Activated CD4-positive, alpha-beta T cell treated with anti-CD3 and anti-CD28 coated beads, Interleukin-2, amount 10 ng/mL, durations not matched to agents 24 days and 14 days (primary cell): ENCODE measurements at regions of chrX and their contacts with region 1.

Region 1: DNA sequence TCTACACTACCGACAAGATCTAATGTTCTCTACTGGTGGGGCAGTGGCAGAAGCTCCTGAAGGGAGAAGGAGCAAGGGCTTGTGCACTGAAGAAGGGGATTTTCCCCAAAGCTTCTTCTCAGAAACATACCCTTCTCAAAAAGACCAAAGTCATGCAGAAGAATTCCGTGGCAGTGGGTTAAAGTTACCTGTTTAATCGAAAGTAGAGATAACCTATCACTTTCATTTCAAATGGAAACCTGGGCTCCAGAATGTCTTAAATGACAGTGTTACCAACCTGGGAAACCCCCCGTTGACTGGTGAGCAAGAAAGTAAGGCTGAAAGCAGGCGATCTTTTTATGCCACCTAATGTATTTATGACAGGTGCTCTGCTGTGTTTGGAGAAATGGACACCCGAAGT is 92.5 kb upstream of the TEX13D start:
- DNase-seq: peak; percentile 84
- H3K4me3 Mint-ChIP-seq: peak overlapping the region; percentile 71
- H3K27ac Mint-ChIP-seq: peak overlapping the region; percentile 84
- H3K4me1 Mint-ChIP-seq: peaks cover 31% of the 10 kb centered on the region
- H3K27me3 Mint-ChIP-seq: no peaks in the 10 kb centered on the region

Region 2: DNA sequence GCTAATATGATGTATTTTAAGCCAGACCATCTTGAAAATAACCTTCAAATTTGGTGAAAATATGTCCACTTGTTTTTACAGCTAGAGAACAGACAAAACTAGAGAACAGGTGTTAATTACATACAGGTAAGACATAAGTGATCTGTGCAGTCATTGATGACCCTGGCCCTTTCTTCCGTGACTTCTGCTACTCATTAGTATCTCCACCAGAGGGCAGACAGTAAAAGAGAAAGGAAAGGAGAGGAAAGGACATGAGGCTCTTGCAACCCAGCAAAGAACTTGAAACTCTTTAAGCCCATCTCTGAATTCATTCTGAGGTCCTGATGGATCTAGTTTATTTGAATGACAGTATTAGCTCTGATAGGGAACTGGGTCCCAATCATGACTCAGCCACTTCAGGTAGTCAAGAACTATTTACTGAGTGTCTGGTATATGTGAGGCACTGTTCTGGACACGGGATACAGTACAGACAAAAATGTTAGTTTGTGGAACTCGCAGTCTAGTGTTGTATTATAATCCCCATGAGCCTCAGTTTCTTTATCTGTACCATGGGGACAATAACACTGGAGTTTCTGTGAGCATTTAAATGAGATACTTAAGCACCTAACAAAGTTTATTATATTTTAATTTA is 28.5 kb before region 1 on chrX:
- intact Hi-C with region 1: loop called (anchors 1 kb)
- DNase-seq: peak; percentile 79
- H3K4me3 Mint-ChIP-seq: no peak overlapping the region
- H3K27ac Mint-ChIP-seq: no peak overlapping the region
- H3K4me1 Mint-ChIP-seq: peaks cover 33% of the 10 kb centered on the region
- H3K27me3 Mint-ChIP-seq: no peaks in the 10 kb centered on the region

Region 3: DNA sequence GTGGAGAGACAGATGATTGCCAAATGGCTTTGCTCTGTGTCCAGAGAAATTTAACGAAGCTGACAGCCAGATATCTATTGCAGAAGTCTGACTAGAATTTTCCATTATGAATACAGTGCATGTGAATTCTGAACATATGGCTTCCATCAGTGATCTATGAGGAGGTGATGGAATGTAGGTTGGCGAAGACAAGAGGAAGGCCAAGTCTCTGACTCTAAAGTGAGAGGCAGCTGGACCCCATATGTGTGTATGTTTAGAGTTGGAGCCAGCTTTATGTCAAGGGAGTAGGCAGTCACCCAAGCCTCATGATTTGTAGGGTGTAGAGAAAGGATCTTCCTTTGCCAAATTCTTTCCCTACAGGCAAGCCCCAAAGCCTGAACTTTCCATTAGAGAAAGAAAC is 16.3 kb after region 1 on chrX:
- intact Hi-C with region 1: loop called (anchors 2 kb)
- DNase-seq: no peak
- H3K4me3 Mint-ChIP-seq: no peak overlapping the region
- H3K27ac Mint-ChIP-seq: no peak overlapping the region
- H3K4me1 Mint-ChIP-seq: peaks cover 15% of the 10 kb centered on the region
- H3K27me3 Mint-ChIP-seq: no peaks in the 10 kb centered on the region

Region 4: GRCh38 chrX:124293810-124294209 is 53.9 kb after region 1 on chrX:
- intact Hi-C with region 1: loop called (anchors 2 kb)
- DNase-seq: no peak
- H3K4me3 Mint-ChIP-seq: no peak overlapping the region
- H3K27ac Mint-ChIP-seq: no peak overlapping the region
- H3K4me1 Mint-ChIP-seq: peaks cover 2% of the 10 kb centered on the region
- H3K27me3 Mint-ChIP-seq: no peaks in the 10 kb centered on the region

Region 5: DNA sequence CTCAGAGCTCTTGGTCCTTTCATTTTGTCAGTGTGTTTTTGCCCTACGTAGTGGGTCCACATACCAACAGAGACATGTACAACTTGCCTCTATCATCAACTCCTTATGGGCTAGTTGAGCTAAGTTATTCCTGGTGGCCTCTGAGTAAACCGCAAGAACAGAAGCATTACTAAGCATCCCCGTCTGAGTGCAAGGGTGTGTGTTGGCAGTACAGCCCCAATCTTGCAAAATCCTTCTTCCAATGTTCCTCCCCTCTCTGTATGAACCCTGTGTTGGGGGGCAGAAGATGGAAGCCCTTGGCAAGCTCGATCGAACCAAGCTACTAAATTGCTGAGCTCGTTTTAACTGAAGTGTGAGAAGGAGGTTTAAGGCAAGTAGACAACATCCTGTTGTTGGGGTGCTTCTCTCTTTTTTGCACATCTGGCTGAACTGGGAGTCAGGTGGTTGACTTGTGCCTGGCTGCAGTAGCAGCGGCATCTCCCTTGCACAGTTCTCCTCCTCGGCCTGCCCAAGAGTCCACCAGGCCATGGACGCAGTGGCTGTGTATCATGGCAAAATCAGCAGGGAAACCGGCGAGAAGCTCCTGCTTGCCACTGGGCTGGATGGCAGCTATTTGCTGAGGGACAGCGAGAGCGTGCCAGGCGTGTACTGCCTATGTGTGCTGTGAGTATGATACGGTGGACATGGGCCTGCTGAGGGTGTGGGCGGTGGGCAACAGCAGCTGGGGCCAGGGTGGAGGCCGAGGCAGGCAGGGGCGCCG is 106.4 kb after region 1 on chrX and contains the start of gene SH2D1A:
- intact Hi-C with region 1: loop called (anchors 1 kb)
- DNase-seq: peak; percentile 80
- H3K4me3 Mint-ChIP-seq: peak within 1 kb of the TSS; percentile 88
- H3K27ac Mint-ChIP-seq: peak within 1 kb of the TSS; percentile 99
- H3K4me1 Mint-ChIP-seq: peaks cover 38% of the 10 kb centered on the region
- H3K27me3 Mint-ChIP-seq: no peaks in the 10 kb centered on the region
- total RNA-seq, gene SH2D1A: 51.7 and 53.9 TPM in 2 replicates

Region 6: DNA sequence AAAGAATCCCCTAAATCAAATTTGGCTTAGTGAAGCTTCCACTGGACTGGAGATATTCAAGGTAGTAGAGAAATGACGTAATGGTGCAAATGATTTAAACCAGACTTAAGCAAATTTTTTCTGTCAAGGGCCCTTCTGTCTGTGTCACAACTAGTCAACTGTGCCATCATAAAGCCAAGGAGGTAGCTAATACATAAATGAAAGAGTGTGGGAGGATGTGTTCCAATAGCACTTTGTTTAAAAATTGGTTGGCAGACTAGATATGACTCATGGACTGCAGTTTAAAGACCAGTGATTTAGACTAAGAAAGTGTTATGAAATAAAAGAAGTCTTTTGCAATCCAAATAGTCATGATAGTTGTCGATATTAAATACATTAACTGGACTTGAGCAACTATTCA is 1055.4 kb after region 1 on chrX:
- intact Hi-C with region 1: loop called (anchors 10 kb)
- DNase-seq: no peak
- H3K4me3 Mint-ChIP-seq: peak overlapping the region; percentile 34
- H3K27ac Mint-ChIP-seq: peak overlapping the region; percentile 80
- H3K4me1 Mint-ChIP-seq: peaks cover 15% of the 10 kb centered on the region
- H3K27me3 Mint-ChIP-seq: no peaks in the 10 kb centered on the region